ENCODE measurements at regions of chr6 and their contacts with region 1.

Region 1: GRCh38 chr6:42217519-42218367 is at the start of gene MRPS10:
- DNase-seq: peak; percentile 88 to 93 (median 90)
- H3K4me3 ChIP-seq: peak within 1 kb of the TSS; percentile 71 to 72
- H3K4me3 Mint-ChIP-seq: peak within 1 kb of the TSS; percentile 95 to 99 (median 98)
- H3K27ac ChIP-seq: peak within 1 kb of the TSS; percentile 81
- H3K27ac Mint-ChIP-seq: peak within 1 kb of the TSS; percentile 90 to 98 (median 97)
- H3K4me1 ChIP-seq: peaks cover 29% of the 10 kb centered on the region
- H3K4me1 Mint-ChIP-seq: peaks cover 12 to 28% (median 20%) of the 10 kb centered on the region in 4 donors
- H3K27me3 ChIP-seq: no peaks in the 10 kb centered on the region
- H3K27me3 Mint-ChIP-seq: no peaks in the 10 kb centered on the region
- total RNA-seq, gene MRPS10: 22.6 to 25.1 TPM

Region 2: DNA sequence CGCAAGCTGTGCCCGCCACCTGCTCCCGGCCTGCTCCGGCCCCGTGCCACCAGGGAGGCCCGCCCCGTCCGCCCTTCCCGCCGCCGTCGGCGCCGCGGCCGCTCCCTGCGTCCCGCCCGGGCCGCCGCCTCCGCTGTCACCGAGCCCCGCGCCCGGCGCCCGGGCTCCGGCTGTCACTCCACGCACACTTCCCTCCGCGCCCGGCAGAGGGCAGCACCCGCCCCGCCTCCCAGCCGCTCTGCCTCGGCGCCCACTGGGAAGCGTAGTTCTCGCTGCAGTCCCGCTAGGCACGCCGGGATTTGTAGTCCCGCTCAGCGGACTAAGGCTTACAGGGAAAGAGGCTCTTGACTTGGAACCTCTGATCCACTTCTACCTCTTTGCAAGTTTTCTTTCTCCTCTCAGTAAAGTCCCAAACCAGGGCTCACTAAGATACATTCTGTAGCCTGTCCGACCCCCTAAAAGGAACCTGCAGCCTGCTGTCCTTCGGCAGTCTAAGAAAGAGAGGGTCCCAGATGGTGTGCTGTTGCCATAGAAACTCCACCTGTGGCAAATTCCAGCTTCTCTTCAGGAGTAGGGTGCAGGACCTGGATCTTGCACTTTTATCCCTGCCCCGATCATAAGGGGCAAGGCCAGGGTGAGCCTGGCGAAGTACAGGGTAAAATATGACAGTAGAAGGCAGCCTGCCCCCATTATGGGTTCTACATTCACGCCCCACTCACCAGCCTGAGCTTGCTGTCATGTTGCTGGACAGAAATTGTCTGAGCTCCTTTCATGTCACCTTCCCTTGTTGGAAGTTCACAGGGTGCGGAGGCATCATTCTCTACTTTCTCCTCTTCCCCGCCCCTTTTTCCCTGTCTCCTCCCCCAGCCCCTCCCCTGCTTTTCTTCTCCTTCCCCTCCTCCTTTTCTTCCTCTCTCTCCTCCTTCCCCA is 482.1 kb before region 1 on chr6 and contains the start of gene TFEB:
- CTCF ChIA-PET with region 1: no interaction called
- POLR2A ChIA-PET with region 1: interaction called, 6 read pairs
- intact Hi-C with region 1: loop called (anchors 1 kb)
- DNase-seq: peak; percentile 92 to 95 (median 92)
- H3K4me3 ChIP-seq: peak within 1 kb of the TSS in 1 of 2 donors; percentile 64
- H3K4me3 Mint-ChIP-seq: peak within 1 kb of the TSS; percentile 77 to 91 (median 82)
- H3K27ac ChIP-seq: peak within 1 kb of the TSS; percentile 75
- H3K27ac Mint-ChIP-seq: peak within 1 kb of the TSS; percentile 42 to 93 (median 76)
- H3K4me1 ChIP-seq: peaks cover 38% of the 10 kb centered on the region
- H3K4me1 Mint-ChIP-seq: peaks cover 16 to 35% (median 26%) of the 10 kb centered on the region in 4 donors
- H3K27me3 ChIP-seq: no peaks in the 10 kb centered on the region
- H3K27me3 Mint-ChIP-seq: peaks cover 0 to 1% of the 10 kb centered on the region in 2 donors
- total RNA-seq, gene TFEB: 12.2 to 15.7 TPM

Region 3: DNA sequence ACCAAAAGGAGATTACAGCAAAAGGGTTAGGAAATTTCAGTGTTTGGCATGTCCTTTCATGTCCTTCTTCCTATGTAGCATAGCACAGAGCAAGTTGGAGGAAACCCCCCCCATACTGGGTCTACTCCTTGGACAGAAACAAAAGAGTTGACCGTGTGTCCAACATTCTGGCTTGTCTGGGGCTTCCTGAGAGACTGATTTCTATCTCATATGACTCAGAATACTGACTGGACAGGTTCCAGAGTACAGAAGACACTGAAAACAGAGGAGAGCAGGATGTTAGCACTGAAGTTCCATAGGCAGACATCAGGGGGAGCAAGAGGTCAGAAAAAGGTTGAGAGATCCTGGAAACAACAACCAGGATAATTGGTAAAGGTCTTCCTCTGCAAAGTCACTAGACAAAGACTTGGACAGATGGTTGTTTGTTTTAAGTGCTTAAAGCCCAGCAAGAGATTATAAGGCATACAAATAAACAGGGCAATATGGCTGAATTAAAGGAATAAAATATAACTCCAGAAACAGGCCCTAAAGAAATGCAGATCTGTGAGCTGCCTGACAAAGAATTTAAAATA is 371.0 kb before region 1 on chr6:
- CTCF ChIA-PET with region 1: interaction called, 15 read pairs
- POLR2A ChIA-PET with region 1: no interaction called
- intact Hi-C with region 1: no loop called
- DNase-seq: peak; percentile 41 to 57 (median 51)
- H3K4me3 ChIP-seq: no peak overlapping the region
- H3K4me3 Mint-ChIP-seq: no peak overlapping the region
- H3K27ac ChIP-seq: no peak overlapping the region
- H3K27ac Mint-ChIP-seq: peak overlapping the region in 1 of 7 donors; percentile 53
- H3K4me1 ChIP-seq: no peaks in the 10 kb centered on the region
- H3K4me1 Mint-ChIP-seq: peaks cover 5 to 8% (median 6%) of the 10 kb centered on the region in 4 donors
- H3K27me3 ChIP-seq: no peaks in the 10 kb centered on the region
- H3K27me3 Mint-ChIP-seq: no peaks in the 10 kb centered on the region

Region 4: GRCh38 chr6:42075159-42075838 is 142.4 kb before region 1 on chr6:
- CTCF ChIA-PET with region 1: interaction called, 12 read pairs
- POLR2A ChIA-PET with region 1: interaction called, 3 read pairs
- intact Hi-C with region 1: no loop called
- DNase-seq: peak; percentile 19 to 40 (median 33)
- H3K4me3 ChIP-seq: no peak overlapping the region
- H3K4me3 Mint-ChIP-seq: no peak overlapping the region
- H3K27ac ChIP-seq: no peak overlapping the region
- H3K27ac Mint-ChIP-seq: peak overlapping the region in 2 of 7 donors; percentile 16 to 24
- H3K4me1 ChIP-seq: no peaks in the 10 kb centered on the region
- H3K4me1 Mint-ChIP-seq: peaks cover 0 to 4% (median 1%) of the 10 kb centered on the region in 4 donors
- H3K27me3 ChIP-seq: no peaks in the 10 kb centered on the region
- H3K27me3 Mint-ChIP-seq: no peaks in the 10 kb centered on the region

Region 5: GRCh38 chr6:42322676-42323075 is 104.9 kb after region 1 on chr6:
- CTCF ChIA-PET with region 1: no interaction called
- POLR2A ChIA-PET with region 1: no interaction called
- intact Hi-C with region 1: no loop called
- DNase-seq: no peak
- H3K4me3 ChIP-seq: no peak overlapping the region
- H3K4me3 Mint-ChIP-seq: no peak overlapping the region
- H3K27ac ChIP-seq: no peak overlapping the region
- H3K27ac Mint-ChIP-seq: peak overlapping the region in 2 of 7 donors; percentile 27 to 39
- H3K4me1 ChIP-seq: peaks cover 28% of the 10 kb centered on the region
- H3K4me1 Mint-ChIP-seq: peaks cover 43 to 70% (median 53%) of the 10 kb centered on the region in 4 donors
- H3K27me3 ChIP-seq: no peaks in the 10 kb centered on the region
- H3K27me3 Mint-ChIP-seq: no peaks in the 10 kb centered on the region

Region 6: GRCh38 chr6:42563697-42564505 is 346.2 kb after region 1 on chr6 and contains the start of gene UBR2:
- CTCF ChIA-PET with region 1: interaction called, 5 read pairs
- POLR2A ChIA-PET with region 1: interaction called, 8 read pairs
- intact Hi-C with region 1: loop called (anchors 1 kb)
- DNase-seq: peak; percentile 92 to 98 (median 95)
- H3K4me3 ChIP-seq: peak within 1 kb of the TSS; percentile 98 to 100
- H3K4me3 Mint-ChIP-seq: peak within 1 kb of the TSS; percentile 92 to 100 (median 98)
- H3K27ac ChIP-seq: peak within 1 kb of the TSS; percentile 94
- H3K27ac Mint-ChIP-seq: peak within 1 kb of the TSS; percentile 90 to 98 (median 96)
- H3K4me1 ChIP-seq: peaks cover 33% of the 10 kb centered on the region
- H3K4me1 Mint-ChIP-seq: peaks cover 21 to 43% (median 28%) of the 10 kb centered on the region in 4 donors
- H3K27me3 ChIP-seq: no peaks in the 10 kb centered on the region
- H3K27me3 Mint-ChIP-seq: peaks cover 0 to 1% of the 10 kb centered on the region in 2 donors
- total RNA-seq, gene UBR2: 55.0 to 55.7 TPM